HEK293T (cell line): ENCODE measurements at regions of chr3 and their contacts with region 1.

Region 1: GRCh38 chr3:54518011-54518675 is 395.8 kb downstream of the CACNA2D3 start:
- DNase-seq: no peak

Region 2: GRCh38 chr3:54533856-54534255 is 15.7 kb after region 1 on chr3:
- CTCF ChIA-PET with region 1: interaction called, 12 read pairs
- POLR2A ChIA-PET with region 1: no interaction called
- DNase-seq: no peak